ENCODE measurements at regions of chr22 and their contacts with region 1.

Region 1: DNA sequence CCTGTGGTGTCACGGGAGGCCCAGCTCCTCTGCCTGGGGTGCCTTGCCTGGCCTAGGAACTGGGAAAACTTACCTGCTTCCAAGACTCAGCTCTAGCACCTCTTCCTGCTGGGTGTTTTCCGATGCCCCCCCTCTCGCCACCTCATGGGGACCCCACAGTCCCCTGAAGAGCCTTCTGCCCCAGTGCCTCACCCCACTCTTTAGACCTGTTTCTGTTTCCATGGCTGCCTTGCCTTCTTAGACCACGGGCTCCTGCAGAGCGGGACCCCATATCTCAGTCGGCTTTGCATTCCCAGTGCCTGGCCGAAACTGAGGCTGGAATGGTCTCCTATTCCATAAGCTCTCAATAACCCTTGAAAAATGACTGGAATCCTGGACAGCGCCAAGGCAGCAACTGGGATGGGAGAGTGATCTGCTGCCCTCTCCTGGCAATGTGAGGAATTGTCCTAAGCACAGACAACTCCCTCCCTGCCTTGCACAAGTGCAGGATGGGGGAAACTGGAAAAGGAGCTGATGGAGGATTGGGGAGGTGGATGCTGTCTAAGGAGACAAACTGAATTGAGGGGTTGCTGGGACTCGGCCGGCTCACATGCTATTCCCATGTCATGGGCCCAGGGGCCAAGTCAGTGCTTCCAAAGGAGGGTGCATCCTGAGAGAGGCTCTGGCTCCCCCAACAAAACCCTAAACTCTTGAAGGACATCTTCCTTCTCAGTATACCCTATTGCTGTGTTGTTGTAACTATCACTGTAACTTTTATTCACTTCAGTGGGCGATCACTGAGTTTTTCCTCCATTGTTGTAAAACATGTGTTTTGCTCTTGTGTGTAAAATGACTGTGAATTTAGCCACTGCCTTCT is 26.6 kb upstream of the IL17RA start:
- DNase-seq: peak; percentile 23 to 65
- ATAC-seq: peak; percentile 56 to 88 (median 85)
- H3K4me3 ChIP-seq: no peak overlapping the region
- H3K27ac ChIP-seq: no peak overlapping the region
- H3K4me1 ChIP-seq: peaks cover 0 to 7% (median 0%) of the 10 kb centered on the region in 9 donors
- H3K27me3 ChIP-seq: peaks cover 0 to 4% (median 0%) of the 10 kb centered on the region in 7 donors
- CTCF ChIP-seq: peak; percentile 75 to 94 (median 92)

Region 2: DNA sequence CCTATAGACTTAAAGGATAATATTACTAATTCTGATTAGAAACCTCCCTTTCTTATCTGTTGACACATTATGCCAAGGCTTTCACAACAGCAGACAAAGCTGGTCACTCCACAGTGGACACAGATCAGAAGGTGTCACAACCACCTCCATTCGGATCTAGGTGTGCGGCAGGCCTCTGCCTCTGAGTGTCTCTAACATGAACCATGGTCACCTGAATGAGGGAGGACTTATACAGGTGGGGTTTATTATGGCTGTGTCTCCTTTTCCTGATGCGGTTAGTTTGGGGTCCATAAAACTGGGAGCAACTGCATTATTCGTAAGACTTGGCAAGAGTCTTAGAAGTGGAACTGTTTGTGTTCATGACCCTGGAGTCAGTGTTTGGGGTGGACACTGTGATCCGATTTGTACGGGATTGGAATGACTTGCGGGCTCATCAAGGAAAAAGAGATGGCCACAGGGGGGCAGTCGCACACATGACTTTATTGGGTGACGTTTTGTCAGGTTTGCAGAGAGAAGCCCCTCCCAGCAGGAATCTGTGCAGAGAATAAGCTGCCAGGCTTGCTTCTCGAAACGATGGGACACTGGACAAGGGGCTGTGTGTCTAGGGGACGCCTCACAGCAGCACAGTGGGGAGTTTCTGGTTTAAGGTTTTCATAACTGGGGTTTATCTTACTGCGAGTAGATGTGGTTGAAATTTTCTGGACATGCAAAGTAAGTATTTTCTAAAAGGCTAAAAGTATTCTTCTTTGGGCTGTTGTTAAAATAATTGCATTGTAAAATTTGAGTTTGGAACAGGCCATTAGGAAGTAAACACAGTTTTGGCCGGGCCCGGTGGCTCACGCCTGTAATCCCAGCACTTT is 140.8 kb before region 1 on chr22:
- intact Hi-C with region 1: loop called (anchors 1 to 5 kb)
- DNase-seq: peak; percentile 49 to 56
- ATAC-seq: peak in 3 of 8 donors; percentile 38 to 70 (median 56)
- H3K4me3 ChIP-seq: no peak overlapping the region
- H3K27ac ChIP-seq: no peak overlapping the region
- H3K4me1 ChIP-seq: no peaks in the 10 kb centered on the region
- H3K27me3 ChIP-seq: peaks cover 0 to 79% (median 69%) of the 10 kb centered on the region in 7 donors
- CTCF ChIP-seq: peak; percentile 35 to 68 (median 64)

Region 3: DNA sequence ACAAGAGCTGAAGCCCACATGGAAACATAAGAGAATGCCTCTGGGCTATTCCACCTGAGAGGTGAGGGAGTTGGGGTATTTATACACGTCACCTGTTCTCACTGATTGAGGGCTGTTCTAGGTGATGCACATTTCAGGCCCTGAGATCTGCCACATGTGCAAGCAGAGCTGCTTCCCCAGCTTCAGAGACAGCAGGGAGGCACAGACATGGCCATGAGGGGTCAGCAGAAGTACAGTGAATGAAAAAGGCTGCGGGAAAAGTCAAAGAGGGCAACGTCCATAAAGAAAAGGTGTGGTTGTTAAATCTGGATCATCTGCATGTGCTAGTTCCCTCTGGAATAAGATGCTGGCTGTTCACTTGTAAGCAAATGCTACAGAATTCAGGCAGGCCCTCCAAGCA is 125.6 kb before region 1 on chr22:
- intact Hi-C with region 1: loop called in 1 of 10 experiments (anchors 5 kb)
- DNase-seq: no peak
- ATAC-seq: peak in 1 of 8 donors; percentile 20
- H3K4me3 ChIP-seq: no peak overlapping the region
- H3K27ac ChIP-seq: no peak overlapping the region
- H3K4me1 ChIP-seq: no peaks in the 10 kb centered on the region
- H3K27me3 ChIP-seq: peaks cover 0 to 71% (median 46%) of the 10 kb centered on the region in 7 donors
- CTCF ChIP-seq: peak in 5 of 9 donors; percentile 14 to 39 (median 21)

Region 4: DNA sequence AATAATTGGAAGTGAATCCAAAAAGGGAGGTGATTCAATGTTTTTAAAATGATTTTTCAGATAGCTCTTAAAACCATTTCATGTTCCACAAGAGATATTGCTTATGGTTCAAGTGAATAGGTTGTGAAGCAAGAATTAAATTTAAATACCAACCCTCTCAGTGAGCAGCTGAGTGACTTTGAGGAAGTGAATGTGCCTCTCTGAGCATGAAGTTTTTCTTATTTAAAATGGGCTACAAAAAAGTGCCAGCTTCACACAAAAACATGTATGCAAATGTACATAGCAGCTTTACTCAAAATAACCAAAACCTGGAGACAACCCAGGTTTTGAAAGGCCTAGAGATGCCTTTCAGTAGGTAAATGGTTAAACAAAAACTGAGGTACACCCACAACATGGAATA is 14.7 kb before region 1 on chr22:
- intact Hi-C with region 1: no loop called
- DNase-seq: no peak
- ATAC-seq: no peak
- H3K4me3 ChIP-seq: no peak overlapping the region
- H3K27ac ChIP-seq: no peak overlapping the region
- H3K4me1 ChIP-seq: peaks cover 0 to 13% (median 0%) of the 10 kb centered on the region in 9 donors
- H3K27me3 ChIP-seq: peaks cover 0 to 21% (median 0%) of the 10 kb centered on the region in 7 donors
- CTCF ChIP-seq: no peak